Heart left ventricle (tissue), 16 donors: ENCODE measurements at regions of chr7 and their contacts with region 1.

Region 1: GRCh38 chr7:25179771-25180591 is 48.3 kb downstream of the NPVF start:
- DNase-seq: peak; percentile 89 to 97 (median 93)
- ATAC-seq: peak; percentile 94 to 99 (median 98)
- H3K4me3 ChIP-seq: peak overlapping the region; percentile 57 to 93 (median 82)
- H3K27ac ChIP-seq: peak overlapping the region in 11 of 12 donors; percentile 9 to 87 (median 65)
- H3K4me1 ChIP-seq: peaks cover 0 to 15% (median 6%) of the 10 kb centered on the region in 12 donors
- H3K27me3 ChIP-seq: no peaks in the 10 kb centered on the region
- CTCF ChIP-seq: peak; percentile 84 to 97 (median 94)
- POLR2A ChIP-seq: peak in 1 of 2 donors; percentile 53

Region 2: GRCh38 chr7:25109276-25109675 is 70.7 kb before region 1 on chr7:
- intact Hi-C with region 1: no loop called
- DNase-seq: no peak
- ATAC-seq: no peak
- H3K4me3 ChIP-seq: no peak overlapping the region
- H3K27ac ChIP-seq: no peak overlapping the region
- H3K4me1 ChIP-seq: peaks cover 0 to 7% (median 0%) of the 10 kb centered on the region in 12 donors
- H3K27me3 ChIP-seq: no peaks in the 10 kb centered on the region
- CTCF ChIP-seq: no peak
- POLR2A ChIP-seq: no peak

Region 3: GRCh38 chr7:25125137-25125946 is 54.6 kb before region 1 on chr7 and contains the start of gene CYCS:
- intact Hi-C with region 1: loop called in 1 of 10 experiments (anchors 10 kb)
- DNase-seq: peak; percentile 99 to 100 (median 100)
- ATAC-seq: peak; percentile 95 to 97 (median 97)
- H3K4me3 ChIP-seq: peak within 1 kb of the TSS; percentile 68 to 100 (median 82)
- H3K27ac ChIP-seq: peak within 1 kb of the TSS; percentile 87 to 100 (median 96)
- H3K4me1 ChIP-seq: peaks cover 0 to 24% (median 5%) of the 10 kb centered on the region in 12 donors
- H3K27me3 ChIP-seq: no peaks in the 10 kb centered on the region
- CTCF ChIP-seq: no peak
- POLR2A ChIP-seq: peak; percentile 95 to 99
- total RNA-seq, gene CYCS: 125 to 774 (median 550) TPM